ENCODE measurements at regions of chrX and their contacts with region 1.

Region 1: GRCh38 chrX:51487960-51488267 is 8.5 kb downstream of the NUDT11 start:
- DNase-seq: no peak
- ATAC-seq: no peak; the same call in 2 of the 3 replicates
- H3K4me3 ChIP-seq: no peak overlapping the region
- H3K27ac ChIP-seq: no peak overlapping the region
- H3K4me1 ChIP-seq: no peaks in the 10 kb centered on the region
- H3K27me3 ChIP-seq: no peaks in the 10 kb centered on the region; a peak in 1 of 4 replicates
- CTCF ChIP-seq: no peak
- EP300 ChIP-seq: no peak
- POLR2A ChIP-seq: no peak
- RAD21 ChIP-seq: no peak

Region 2: GRCh38 chrX:51476930-51477329 is 11.0 kb before region 1 on chrX:
- CTCF ChIA-PET with region 1: interaction called, 14 read pairs
- POLR2A ChIA-PET with region 1: no interaction called
- RAD21 ChIA-PET with region 1: no interaction called
- SMC1A ChIA-PET with region 1: interaction called, 4 read pairs
- in situ Hi-C with region 1: no loop called
- intact Hi-C with region 1: no loop called
- DNase-seq: no peak
- ATAC-seq: no peak
- H3K4me3 ChIP-seq: no peak overlapping the region
- H3K27ac ChIP-seq: no peak overlapping the region
- H3K4me1 ChIP-seq: no peaks in the 10 kb centered on the region
- H3K27me3 ChIP-seq: no peaks in the 10 kb centered on the region
- CTCF ChIP-seq: no peak
- EP300 ChIP-seq: no peak
- POLR2A ChIP-seq: no peak
- RAD21 ChIP-seq: no peak

Region 3: GRCh38 chrX:52261463-52262194 is 773.7 kb after region 1 on chrX:
- CTCF ChIA-PET with region 1: interaction called, 4 read pairs
- POLR2A ChIA-PET with region 1: no interaction called
- RAD21 ChIA-PET with region 1: no interaction called
- SMC1A ChIA-PET with region 1: no interaction called
- in situ Hi-C with region 1: no loop called
- intact Hi-C with region 1: loop called (anchors 2 kb)
- DNase-seq: peak; percentile 64
- ATAC-seq: peak; percentile 100
- H3K4me3 ChIP-seq: peak overlapping the region; percentile 68
- H3K27ac ChIP-seq: peak overlapping the region; percentile 79
- H3K4me1 ChIP-seq: no peaks in the 10 kb centered on the region; the same call in none of the 2 replicates
- H3K27me3 ChIP-seq: no peaks in the 10 kb centered on the region
- CTCF ChIP-seq: peak; percentile 80 to 96 (median 93); a peak in 5 of 6 replicates
- EP300 ChIP-seq: peak in 1 of 2 experiments; percentile 32; a peak in 1 of 4 replicates
- POLR2A ChIP-seq: peak; percentile 84
- RAD21 ChIP-seq: peak; percentile 97